Activated CD4-positive, alpha-beta T cell treated with anti-CD3 and anti-CD28 coated beads for 36 hours (primary cell): ENCODE measurements at regions of chr5 and their contacts with region 1.

Region 1: GRCh38 chr5:40410231-40410861 is 269.4 kb upstream of the PTGER4 start:
- DNase-seq: peak; percentile 80
- ATAC-seq: peak; percentile 82
- H3K4me3 Mint-ChIP-seq: peak overlapping the region; percentile 58
- H3K27ac Mint-ChIP-seq: peak overlapping the region; percentile 94
- H3K4me1 Mint-ChIP-seq: peaks cover 67% of the 10 kb centered on the region
- H3K27me3 Mint-ChIP-seq: no peaks in the 10 kb centered on the region

Region 2: GRCh38 chr5:40321514-40321913 is 88.8 kb before region 1 on chr5:
- CTCF ChIA-PET with region 1: no interaction called
- POLR2A ChIA-PET with region 1: no interaction called
- intact Hi-C with region 1: no loop called
- DNase-seq: no peak
- ATAC-seq: no peak
- H3K4me3 Mint-ChIP-seq: no peak overlapping the region
- H3K27ac Mint-ChIP-seq: no peak overlapping the region
- H3K4me1 Mint-ChIP-seq: peaks cover 11% of the 10 kb centered on the region
- H3K27me3 Mint-ChIP-seq: no peaks in the 10 kb centered on the region

Region 3: DNA sequence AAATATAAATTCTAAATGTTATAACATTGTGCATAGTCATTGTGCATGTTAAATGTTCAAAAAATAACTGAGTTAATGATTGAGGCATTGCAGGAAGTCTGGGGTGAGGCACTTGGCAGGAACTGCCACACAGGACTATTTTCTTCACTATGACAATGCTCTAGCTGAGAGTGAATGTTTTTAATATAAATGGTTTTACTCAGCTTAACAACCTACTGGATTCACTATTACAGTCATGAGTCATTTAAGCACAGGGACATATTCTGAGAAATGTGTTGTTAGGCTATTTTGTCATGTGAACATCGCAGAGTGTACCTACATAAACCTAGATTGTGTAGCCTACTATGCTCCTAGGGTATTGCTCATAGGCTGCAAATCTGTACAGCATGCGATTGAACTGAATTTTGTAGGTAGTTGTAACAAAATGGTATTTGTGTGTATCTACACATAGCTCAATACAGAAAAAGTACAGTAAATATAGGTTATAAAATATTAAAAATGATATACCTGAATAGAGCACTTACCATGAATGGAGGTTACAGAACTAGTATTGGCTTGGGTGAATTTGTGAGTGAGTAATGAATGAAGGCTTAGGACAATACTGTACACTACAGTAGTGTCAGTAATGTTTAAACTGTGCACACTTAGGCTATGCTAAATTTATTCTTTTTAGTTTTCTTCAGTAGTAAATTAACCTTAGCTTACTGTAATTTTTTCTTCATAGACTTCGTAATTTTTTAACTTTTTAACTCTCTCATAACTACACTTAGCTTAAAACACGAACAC is 76.7 kb before region 1 on chr5:
- CTCF ChIA-PET with region 1: interaction called, 4 read pairs
- POLR2A ChIA-PET with region 1: interaction called, 5 read pairs
- intact Hi-C with region 1: loop called (anchors 1 kb)
- DNase-seq: peak; percentile 49
- ATAC-seq: peak; percentile 96
- H3K4me3 Mint-ChIP-seq: no peak overlapping the region
- H3K27ac Mint-ChIP-seq: no peak overlapping the region
- H3K4me1 Mint-ChIP-seq: peaks cover 41% of the 10 kb centered on the region
- H3K27me3 Mint-ChIP-seq: no peaks in the 10 kb centered on the region

Region 4: GRCh38 chr5:40437452-40437861 is 27.1 kb after region 1 on chr5:
- CTCF ChIA-PET with region 1: interaction called, 8 read pairs
- POLR2A ChIA-PET with region 1: interaction called, 5 read pairs
- intact Hi-C with region 1: loop called (anchors 1 kb)
- DNase-seq: peak; percentile 55
- ATAC-seq: peak; percentile 61
- H3K4me3 Mint-ChIP-seq: no peak overlapping the region
- H3K27ac Mint-ChIP-seq: peak overlapping the region; percentile 61
- H3K4me1 Mint-ChIP-seq: peaks cover 80% of the 10 kb centered on the region
- H3K27me3 Mint-ChIP-seq: no peaks in the 10 kb centered on the region

Region 5: GRCh38 chr5:40502736-40503135 is 92.4 kb after region 1 on chr5:
- CTCF ChIA-PET with region 1: no interaction called
- POLR2A ChIA-PET with region 1: no interaction called
- intact Hi-C with region 1: no loop called
- DNase-seq: no peak
- ATAC-seq: no peak
- H3K4me3 Mint-ChIP-seq: no peak overlapping the region
- H3K27ac Mint-ChIP-seq: no peak overlapping the region
- H3K4me1 Mint-ChIP-seq: peaks cover 26% of the 10 kb centered on the region
- H3K27me3 Mint-ChIP-seq: no peaks in the 10 kb centered on the region

Region 6: DNA sequence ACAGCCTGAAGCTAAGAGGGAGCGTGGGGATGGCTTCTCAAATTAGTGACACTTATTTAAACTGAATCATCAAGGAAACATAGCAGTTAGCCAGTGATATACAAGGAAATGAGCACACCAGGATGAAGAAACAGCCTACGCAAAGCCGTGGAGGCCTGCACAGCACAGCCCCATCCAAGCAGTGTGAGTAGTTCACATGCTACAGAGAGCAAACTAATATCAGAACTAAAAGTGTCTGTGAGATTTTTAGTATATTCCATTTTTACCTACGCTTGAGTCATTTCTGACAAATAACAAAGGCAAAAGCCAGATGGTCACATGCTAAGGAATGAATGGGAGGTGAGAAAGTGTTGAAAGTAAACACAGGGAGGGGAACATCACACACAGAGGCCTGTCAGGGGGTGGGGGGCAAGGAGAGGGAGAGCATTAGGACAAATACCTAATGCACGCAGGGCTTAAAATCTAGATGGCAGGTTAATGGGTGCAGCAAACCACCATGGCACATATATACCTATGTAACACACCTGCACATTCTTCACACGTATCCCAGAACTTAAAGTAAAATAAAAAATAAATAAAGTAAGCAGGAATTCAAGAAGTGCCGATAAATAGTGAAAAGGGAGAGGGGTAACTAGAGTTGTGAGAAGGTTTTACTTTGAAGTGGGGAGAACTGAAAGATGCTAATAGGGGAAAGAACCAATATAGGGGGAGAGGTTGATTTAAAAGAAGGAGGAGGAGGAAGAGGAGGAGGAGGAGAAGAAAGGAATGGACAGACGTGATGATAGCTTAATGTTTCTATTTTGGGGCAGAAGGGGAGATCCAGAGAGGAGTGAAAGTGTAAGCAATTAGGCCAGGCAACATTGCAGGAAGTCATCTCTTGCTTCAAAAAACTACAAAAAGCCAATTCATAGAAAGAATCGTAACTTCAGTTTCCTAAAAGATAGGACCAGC is 168.4 kb after region 1 on chr5:
- CTCF ChIA-PET with region 1: no interaction called
- POLR2A ChIA-PET with region 1: interaction called, 4 read pairs
- intact Hi-C with region 1: loop called (anchors 1 kb)
- DNase-seq: peak; percentile 84
- ATAC-seq: peak; percentile 95
- H3K4me3 Mint-ChIP-seq: peak overlapping the region; percentile 49
- H3K27ac Mint-ChIP-seq: peak overlapping the region; percentile 72
- H3K4me1 Mint-ChIP-seq: peaks cover 44% of the 10 kb centered on the region
- H3K27me3 Mint-ChIP-seq: no peaks in the 10 kb centered on the region